ENCODE measurements at regions of chr3 and their contacts with region 1.

Region 1: GRCh38 chr3:54853573-54854404 is 74.1 kb downstream of the LRTM1 start:
- DNase-seq: peak; percentile 62
- ATAC-seq: peak; percentile 93
- H3K4me3 ChIP-seq: no peak overlapping the region
- H3K27ac ChIP-seq: no peak overlapping the region
- H3K4me1 ChIP-seq: peaks cover 13% of the 10 kb centered on the region; the same call in 1 of the 2 replicates
- H3K27me3 ChIP-seq: peaks cover 28% of the 10 kb centered on the region
- CTCF ChIP-seq: peak; percentile 95

Region 2: DNA sequence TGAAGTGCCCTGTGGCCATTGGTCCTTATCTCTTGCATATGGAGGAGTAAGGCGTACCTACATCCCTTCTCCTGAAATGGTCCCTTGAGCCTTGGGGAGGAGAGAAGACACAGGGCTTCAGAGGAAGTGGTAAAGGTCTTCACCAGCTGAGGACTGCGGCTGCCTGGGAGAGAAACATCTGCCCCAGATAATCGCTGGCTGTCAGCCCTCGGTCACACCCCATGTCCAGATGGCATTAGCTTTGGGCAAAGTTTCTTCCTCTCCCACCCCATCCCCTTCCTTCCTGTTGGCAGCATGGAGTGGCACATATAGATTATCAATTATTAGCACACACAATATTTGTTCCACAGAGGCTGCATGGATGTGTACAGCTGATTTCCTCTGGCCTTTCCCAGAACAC is 12.5 kb after region 1 on chr3:
- CTCF ChIA-PET with region 1: no interaction called
- POLR2A ChIA-PET with region 1: no interaction called
- intact Hi-C with region 1: no loop called
- DNase-seq: no peak
- ATAC-seq: no peak
- H3K4me3 ChIP-seq: no peak overlapping the region
- H3K27ac ChIP-seq: no peak overlapping the region
- H3K4me1 ChIP-seq: peaks cover 7% of the 10 kb centered on the region
- H3K27me3 ChIP-seq: no peaks in the 10 kb centered on the region
- CTCF ChIP-seq: no peak

Region 3: GRCh38 chr3:55091381-55092225 is 237.8 kb after region 1 on chr3:
- CTCF ChIA-PET with region 1: no interaction called
- POLR2A ChIA-PET with region 1: no interaction called
- intact Hi-C with region 1: no loop called
- DNase-seq: peak; percentile 22
- ATAC-seq: no peak
- H3K4me3 ChIP-seq: no peak overlapping the region
- H3K27ac ChIP-seq: no peak overlapping the region
- H3K4me1 ChIP-seq: no peaks in the 10 kb centered on the region
- H3K27me3 ChIP-seq: peaks cover 27% of the 10 kb centered on the region
- CTCF ChIP-seq: no peak

Region 4: DNA sequence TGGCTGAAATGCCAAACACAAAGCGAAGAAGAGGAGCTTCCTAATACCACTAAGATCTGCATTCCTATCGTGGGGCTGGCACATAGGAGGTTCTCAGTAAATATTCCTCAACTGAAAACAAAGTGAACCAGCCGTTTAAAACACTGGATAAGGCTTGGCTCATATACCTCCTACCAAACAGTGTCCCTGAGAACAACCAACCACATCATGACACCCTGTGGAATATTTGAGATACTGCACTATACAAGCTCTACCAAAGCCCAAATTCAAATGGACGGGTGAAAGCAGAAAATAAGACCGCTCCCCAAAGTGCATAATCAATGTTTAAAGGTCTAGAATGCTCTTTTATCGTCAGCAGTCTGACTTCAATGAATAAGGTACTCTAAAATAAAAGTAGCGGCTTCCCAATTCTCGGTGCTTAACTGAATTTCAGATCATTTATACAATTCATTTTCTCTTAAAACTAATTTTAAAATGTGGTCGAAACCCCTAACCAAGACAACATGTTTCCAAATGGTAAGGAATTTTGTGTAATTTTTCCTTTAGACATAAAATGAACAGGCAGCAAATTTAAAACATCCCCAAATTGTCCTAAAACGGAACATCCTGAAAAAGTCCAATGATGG is 1188.7 kb after region 1 on chr3:
- CTCF ChIA-PET with region 1: no interaction called
- POLR2A ChIA-PET with region 1: no interaction called
- intact Hi-C with region 1: loop called (anchors 5 kb)
- DNase-seq: peak; percentile 66
- ATAC-seq: peak; percentile 98
- H3K4me3 ChIP-seq: no peak overlapping the region
- H3K27ac ChIP-seq: no peak overlapping the region
- H3K4me1 ChIP-seq: no peaks in the 10 kb centered on the region
- H3K27me3 ChIP-seq: peaks cover 49% of the 10 kb centered on the region
- CTCF ChIP-seq: peak; percentile 73

Measured in PC-3 (cell line).